Adrenal gland (tissue), 19 donors: ENCODE measurements at regions of chr5 and their contacts with region 1.

Region 1: DNA sequence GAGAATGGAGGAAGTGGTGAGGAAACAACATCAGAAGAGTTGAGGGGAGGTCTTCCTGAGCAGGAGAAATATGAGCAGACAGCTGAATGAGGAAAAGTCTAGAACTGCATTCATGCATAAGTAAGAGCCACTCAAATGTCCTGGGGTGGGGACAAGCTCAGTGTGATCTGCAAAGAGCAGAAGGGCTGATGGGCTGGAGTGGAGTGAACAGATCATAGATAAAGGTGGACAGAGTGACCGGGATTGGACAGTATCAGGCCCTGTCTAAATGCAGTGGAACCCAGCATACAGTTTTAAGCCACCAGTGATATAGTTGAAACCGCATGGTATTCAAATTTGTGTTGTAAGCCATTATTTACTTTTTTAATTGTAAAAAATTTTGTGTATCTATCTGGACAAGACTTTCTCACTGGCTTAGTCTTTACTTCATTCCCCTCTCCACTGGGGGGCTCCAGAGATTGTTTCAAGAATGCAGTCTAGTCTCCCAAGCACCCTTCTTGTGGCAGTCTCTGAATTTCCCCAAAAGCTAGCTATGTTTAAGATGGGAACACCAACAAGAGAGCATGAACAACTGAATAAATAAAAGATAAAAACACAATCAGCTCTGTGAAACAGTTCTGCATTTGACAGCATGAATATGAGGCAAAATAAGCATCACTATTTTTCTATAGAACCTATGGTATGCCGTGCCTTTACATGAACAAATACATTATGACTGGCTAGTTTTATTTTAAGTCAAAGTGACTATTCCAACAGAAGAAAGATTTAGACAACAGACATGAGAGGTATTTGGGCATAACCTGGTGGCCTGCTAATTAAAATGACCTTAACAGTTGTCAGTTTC is 10.7 kb upstream of the STK32A start:
- DNase-seq: peak; percentile 42 to 72 (median 62)
- H3K4me3 ChIP-seq: no peak overlapping the region
- H3K27ac ChIP-seq: no peak overlapping the region
- H3K4me1 ChIP-seq: no peaks in the 10 kb centered on the region
- H3K27me3 ChIP-seq: no peaks in the 10 kb centered on the region
- CTCF ChIP-seq: peak; percentile 51 to 75 (median 66)
- POLR2A ChIP-seq: no peak

Region 2: GRCh38 chr5:147369742-147370374 is 145.7 kb after region 1 on chr5:
- intact Hi-C with region 1: loop called in 1 of 2 experiments (anchors 5 kb)
- DNase-seq: no peak
- H3K4me3 ChIP-seq: no peak overlapping the region
- H3K27ac ChIP-seq: no peak overlapping the region
- H3K4me1 ChIP-seq: no peaks in the 10 kb centered on the region
- H3K27me3 ChIP-seq: no peaks in the 10 kb centered on the region
- CTCF ChIP-seq: peak; percentile 38 to 86 (median 76)
- POLR2A ChIP-seq: no peak

Region 3: DNA sequence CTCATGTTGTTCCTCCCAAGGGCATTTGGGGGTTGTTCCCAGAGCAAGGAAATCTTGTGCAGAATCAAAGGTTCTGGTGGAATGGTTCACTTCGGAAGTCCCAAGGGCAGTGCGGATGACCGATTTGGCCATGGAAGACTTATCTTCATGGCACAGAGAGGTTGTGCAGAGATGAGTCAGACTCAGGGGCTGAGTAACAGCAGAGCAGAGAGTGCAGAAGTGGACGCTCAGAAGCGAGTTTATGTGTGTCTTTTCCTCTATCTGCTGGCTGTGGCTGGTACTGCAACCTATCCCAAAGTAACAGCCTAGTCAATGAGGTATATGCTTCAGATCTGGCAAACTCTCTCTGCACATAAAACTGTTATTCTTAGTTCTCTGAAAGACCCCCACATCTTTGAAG is 167.6 kb after region 1 on chr5:
- intact Hi-C with region 1: loop called in 1 of 2 experiments (anchors 10 kb)
- DNase-seq: peak; percentile 76 to 91 (median 89)
- H3K4me3 ChIP-seq: no peak overlapping the region
- H3K27ac ChIP-seq: peak overlapping the region in 2 of 5 donors; percentile 35 to 53
- H3K4me1 ChIP-seq: no peaks in the 10 kb centered on the region
- H3K27me3 ChIP-seq: no peaks in the 10 kb centered on the region
- CTCF ChIP-seq: peak; percentile 61 to 85 (median 74)
- POLR2A ChIP-seq: no peak

Region 4: DNA sequence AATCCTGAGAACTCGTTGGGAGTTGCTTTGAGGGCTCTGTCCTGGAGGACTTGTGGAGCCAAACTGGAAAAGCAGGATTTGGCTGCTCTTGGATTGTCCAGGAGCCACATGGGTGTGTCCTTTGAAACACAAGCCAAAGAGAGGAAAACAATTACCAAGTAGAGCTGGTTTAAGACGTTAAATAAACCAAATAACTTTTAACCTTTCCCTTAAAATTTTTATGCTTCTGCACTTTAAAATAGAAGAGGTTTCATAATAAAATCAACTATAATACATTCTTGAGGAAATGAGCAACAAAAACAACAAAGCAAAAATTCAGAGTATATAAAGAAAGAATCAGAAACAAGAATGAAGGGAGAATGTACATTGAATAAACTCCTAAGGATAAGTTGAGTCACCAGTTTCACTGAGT is 668.7 kb after region 1 on chr5:
- intact Hi-C with region 1: no loop called
- DNase-seq: no peak
- H3K4me3 ChIP-seq: no peak overlapping the region
- H3K27ac ChIP-seq: no peak overlapping the region
- H3K4me1 ChIP-seq: no peaks in the 10 kb centered on the region
- H3K27me3 ChIP-seq: no peaks in the 10 kb centered on the region
- CTCF ChIP-seq: no peak
- POLR2A ChIP-seq: no peak